ENCODE measurements at regions of chr11 and their contacts with region 1.

Region 1: DNA sequence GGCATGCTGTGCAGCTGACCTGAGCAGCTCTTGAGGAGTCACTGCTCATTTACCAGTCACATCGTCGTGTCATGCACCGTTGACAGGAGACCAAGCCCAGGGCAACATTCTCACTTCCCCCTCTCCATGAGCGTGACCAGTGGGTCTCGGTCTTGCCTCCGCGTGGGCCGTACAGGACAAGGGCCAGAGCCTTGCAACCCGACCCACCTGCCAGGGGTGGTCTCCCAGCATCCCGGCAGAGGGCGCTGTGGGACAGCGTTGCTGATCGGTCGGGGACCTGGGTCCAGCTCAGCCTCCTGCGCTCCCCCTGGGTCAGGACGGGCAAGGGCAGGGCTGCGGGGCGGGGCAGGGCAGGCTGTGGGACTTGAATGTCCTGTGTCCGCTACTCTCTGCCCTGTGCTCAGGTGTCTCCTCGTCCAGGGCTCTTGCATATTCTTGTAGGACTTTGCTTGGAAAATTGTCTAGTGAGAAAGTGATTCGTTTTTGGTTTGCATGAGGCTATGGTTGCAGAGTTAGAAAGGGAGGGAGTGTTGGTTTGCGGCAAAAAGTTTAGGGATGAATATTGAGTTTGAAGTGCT is 16.2 kb downstream of the EIF4G2 start:
- DNase-seq: peak; percentile 83
- ATAC-seq: peak; percentile 91
- H3K4me3 Mint-ChIP-seq: peak overlapping the region; percentile 13
- H3K27ac Mint-ChIP-seq: no peak overlapping the region
- H3K4me1 Mint-ChIP-seq: peaks cover 16% of the 10 kb centered on the region
- H3K27me3 Mint-ChIP-seq: no peaks in the 10 kb centered on the region
- CTCF ChIP-seq: peak; percentile 72

Region 2: GRCh38 chr11:10701982-10702381 is 90.5 kb before region 1 on chr11:
- CTCF ChIA-PET with region 1: no interaction called
- POLR2A ChIA-PET with region 1: interaction called, 14 read pairs
- intact Hi-C with region 1: no loop called
- DNase-seq: no peak
- ATAC-seq: no peak
- H3K4me3 Mint-ChIP-seq: no peak overlapping the region
- H3K27ac Mint-ChIP-seq: no peak overlapping the region
- H3K4me1 Mint-ChIP-seq: peaks cover 5% of the 10 kb centered on the region
- H3K27me3 Mint-ChIP-seq: no peaks in the 10 kb centered on the region
- CTCF ChIP-seq: no peak

Region 3: GRCh38 chr11:10803676-10804075 is 11.2 kb after region 1 on chr11:
- CTCF ChIA-PET with region 1: interaction called, 27 read pairs
- POLR2A ChIA-PET with region 1: interaction called, 77 read pairs
- intact Hi-C with region 1: loop called (anchors 1 kb)
- DNase-seq: no peak
- ATAC-seq: no peak
- H3K4me3 Mint-ChIP-seq: no peak overlapping the region
- H3K27ac Mint-ChIP-seq: no peak overlapping the region
- H3K4me1 Mint-ChIP-seq: peaks cover 45% of the 10 kb centered on the region
- H3K27me3 Mint-ChIP-seq: no peaks in the 10 kb centered on the region
- CTCF ChIP-seq: no peak

Region 4: GRCh38 chr11:10857709-10858438 is 65.4 kb after region 1 on chr11 and contains the start of gene ZBED5:
- CTCF ChIA-PET with region 1: interaction called, 6 read pairs
- POLR2A ChIA-PET with region 1: interaction called, 8 read pairs
- intact Hi-C with region 1: loop called (anchors 2 kb)
- DNase-seq: peak; percentile 93
- ATAC-seq: peak; percentile 89
- H3K4me3 Mint-ChIP-seq: peak within 1 kb of the TSS; percentile 100
- H3K27ac Mint-ChIP-seq: peak within 1 kb of the TSS; percentile 100
- H3K4me1 Mint-ChIP-seq: peaks cover 48% of the 10 kb centered on the region
- H3K27me3 Mint-ChIP-seq: no peaks in the 10 kb centered on the region
- CTCF ChIP-seq: no peak
- total RNA-seq, gene ZBED5: 111 and 116 TPM in 2 replicates

Region 5: DNA sequence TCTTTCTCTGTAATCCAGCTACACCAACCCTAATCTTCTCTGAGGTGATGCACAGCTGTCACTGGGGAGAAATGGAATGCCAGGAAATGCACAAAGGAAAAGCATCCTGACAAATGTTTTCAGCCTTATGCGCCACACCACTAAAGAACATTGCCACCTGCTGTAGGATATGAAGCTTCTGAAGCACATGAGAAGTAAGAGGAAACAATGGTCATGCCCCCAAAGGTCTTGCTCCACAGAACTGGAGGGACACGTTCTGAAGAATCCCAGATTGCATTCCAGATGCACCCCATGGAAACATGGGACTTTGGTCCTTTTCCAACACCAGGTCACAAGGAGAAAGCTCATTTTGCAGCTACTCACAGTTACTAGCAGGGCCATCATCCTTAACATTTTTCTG is 114.0 kb after region 1 on chr11:
- CTCF ChIA-PET with region 1: interaction called, 14 read pairs
- POLR2A ChIA-PET with region 1: no interaction called
- intact Hi-C with region 1: no loop called
- DNase-seq: no peak
- ATAC-seq: no peak
- H3K4me3 Mint-ChIP-seq: no peak overlapping the region
- H3K27ac Mint-ChIP-seq: no peak overlapping the region
- H3K4me1 Mint-ChIP-seq: no peaks in the 10 kb centered on the region
- H3K27me3 Mint-ChIP-seq: peaks cover 4% of the 10 kb centered on the region
- CTCF ChIP-seq: no peak

Region 6: DNA sequence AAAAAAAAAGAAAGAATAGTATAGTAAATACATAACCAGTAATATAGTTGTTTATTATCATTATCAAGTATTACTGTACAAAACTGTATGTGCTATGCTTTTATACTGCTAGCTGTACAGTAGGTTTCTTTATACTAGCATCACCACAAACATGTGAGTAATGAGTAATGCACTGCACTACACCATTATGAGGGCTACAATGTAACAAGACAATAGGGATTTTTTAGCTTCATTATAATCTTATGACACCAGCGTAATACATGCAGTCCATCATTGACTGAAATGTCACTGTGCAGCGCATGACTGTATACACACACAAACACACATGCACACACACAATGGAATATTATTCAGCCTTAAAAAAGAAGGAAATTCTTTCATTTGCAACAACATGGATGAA is 176.9 kb after region 1 on chr11:
- CTCF ChIA-PET with region 1: no interaction called
- POLR2A ChIA-PET with region 1: no interaction called
- intact Hi-C with region 1: no loop called
- DNase-seq: no peak
- ATAC-seq: no peak
- H3K4me3 Mint-ChIP-seq: no peak overlapping the region
- H3K27ac Mint-ChIP-seq: no peak overlapping the region
- H3K4me1 Mint-ChIP-seq: peaks cover 8% of the 10 kb centered on the region
- H3K27me3 Mint-ChIP-seq: peaks cover 4% of the 10 kb centered on the region
- CTCF ChIP-seq: no peak

Region 7: DNA sequence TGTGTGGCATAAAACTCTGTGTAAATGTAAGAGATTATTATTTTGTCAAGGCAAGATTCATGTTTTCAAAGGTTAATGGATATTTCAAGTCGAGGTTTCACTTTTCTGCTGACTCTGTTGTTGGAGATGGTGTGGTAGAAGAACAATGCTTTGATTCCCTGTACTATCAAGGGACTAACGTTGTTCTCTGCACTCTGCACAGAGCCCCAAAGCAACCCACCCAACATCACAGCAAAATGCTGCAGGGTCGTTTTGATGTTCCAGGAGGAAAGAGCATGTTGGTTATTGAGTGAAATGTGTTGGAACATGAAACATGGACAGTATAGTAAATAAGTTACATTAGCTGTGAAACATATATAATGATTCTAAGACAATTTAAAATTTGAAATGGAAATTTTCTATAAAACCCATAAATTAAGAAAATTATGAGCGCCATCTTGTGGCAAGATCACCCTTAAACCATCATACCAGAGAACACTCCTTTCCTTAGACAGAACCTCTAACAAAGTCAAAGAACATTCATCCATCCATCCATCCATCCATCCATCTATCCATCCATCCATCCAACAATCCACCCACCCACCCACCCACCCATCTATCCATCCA is 229.7 kb after region 1 on chr11:
- CTCF ChIA-PET with region 1: interaction called, 30 read pairs
- POLR2A ChIA-PET with region 1: interaction called, 3 read pairs
- intact Hi-C with region 1: loop called (anchors 1 kb)
- DNase-seq: no peak
- ATAC-seq: no peak
- H3K4me3 Mint-ChIP-seq: no peak overlapping the region
- H3K27ac Mint-ChIP-seq: no peak overlapping the region
- H3K4me1 Mint-ChIP-seq: no peaks in the 10 kb centered on the region
- H3K27me3 Mint-ChIP-seq: peaks cover 5% of the 10 kb centered on the region
- CTCF ChIP-seq: peak; percentile 27

Region 8: GRCh38 chr11:11265994-11266606 is 473.6 kb after region 1 on chr11:
- CTCF ChIA-PET with region 1: no interaction called
- POLR2A ChIA-PET with region 1: no interaction called
- intact Hi-C with region 1: loop called (anchors 2 kb)
- DNase-seq: no peak
- ATAC-seq: no peak
- H3K4me3 Mint-ChIP-seq: no peak overlapping the region
- H3K27ac Mint-ChIP-seq: no peak overlapping the region
- H3K4me1 Mint-ChIP-seq: peaks cover 26% of the 10 kb centered on the region
- H3K27me3 Mint-ChIP-seq: no peaks in the 10 kb centered on the region
- CTCF ChIP-seq: no peak

Measured in activated B cell treated with CpG ODN at 0.5 μM for 24 hours (primary cell).